ENCODE measurements at regions of chr5 and their contacts with region 1.

Region 1: GRCh38 chr5:36690041-36690961 is 83.9 kb downstream of the SLC1A3 start:
- DNase-seq: peak; percentile 82
- ATAC-seq: peak; percentile 79 to 85

Region 2: GRCh38 chr5:36029914-36030313 is 660.4 kb before region 1 on chr5:
- intact Hi-C with region 1: no loop called
- DNase-seq: no peak
- ATAC-seq: no peak

Region 3: DNA sequence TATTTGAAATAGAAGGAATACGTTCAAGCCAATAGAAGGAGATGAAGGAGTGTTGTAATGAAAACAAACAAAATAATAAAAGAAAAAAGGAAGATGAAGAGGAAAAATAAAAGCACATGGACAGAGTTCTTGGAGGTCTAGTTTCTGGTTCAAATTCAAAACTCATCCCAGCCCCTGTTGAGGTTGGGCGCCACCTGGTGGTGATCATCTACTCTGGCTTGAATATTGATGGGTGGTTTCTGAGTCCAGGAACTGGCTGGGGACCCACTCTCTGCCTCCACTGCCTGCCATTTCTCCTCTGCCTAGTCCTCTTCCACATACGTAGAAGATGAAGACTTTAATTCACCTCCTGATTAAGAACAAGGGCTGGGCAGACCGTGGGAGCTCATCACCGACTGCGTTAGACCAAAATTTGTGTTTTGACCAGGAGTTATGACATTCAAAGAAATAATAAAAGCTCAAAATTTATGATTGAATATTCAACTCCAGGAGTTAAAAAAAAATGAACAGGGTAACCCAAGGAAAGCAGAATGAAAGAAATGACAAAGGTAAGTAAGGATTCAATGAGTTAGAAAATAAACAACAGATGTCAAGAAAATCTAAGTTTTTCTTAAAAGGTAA is 182.9 kb before region 1 on chr5:
- intact Hi-C with region 1: loop called (anchors 5 to 10 kb)
- DNase-seq: peak; percentile 83
- ATAC-seq: peak; percentile 72 to 73